PC-9 (cell line): ENCODE measurements at regions of chr18 and their contacts with region 1.

Region 1: GRCh38 chr18:13619505-13620202 is 106.7 kb downstream of the FAM210A start:
- DNase-seq: no peak
- H3K4me3 ChIP-seq: no peak overlapping the region
- H3K27ac ChIP-seq: no peak overlapping the region
- H3K4me1 ChIP-seq: no peaks in the 10 kb centered on the region
- H3K27me3 ChIP-seq: peaks cover 93% of the 10 kb centered on the region
- CTCF ChIP-seq: no peak

Region 2: DNA sequence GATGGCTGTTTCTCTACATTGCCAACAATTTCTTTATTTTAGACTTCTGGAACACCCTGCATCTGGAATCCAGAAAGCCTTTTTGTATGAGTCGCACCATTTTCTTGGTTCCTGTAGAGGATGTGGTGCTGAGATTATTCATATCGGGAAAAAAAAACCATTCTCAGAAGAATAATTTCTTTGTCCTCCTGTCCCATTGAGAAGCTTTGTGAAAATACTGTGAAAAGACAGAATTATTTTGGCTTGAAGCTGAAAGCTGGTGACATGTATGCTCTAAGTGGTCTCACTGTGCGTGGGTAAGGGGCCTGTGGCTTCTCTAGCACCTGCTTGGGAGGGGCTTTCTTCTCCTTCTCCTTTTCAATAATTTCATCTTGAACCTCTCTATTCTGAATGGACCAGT is 31.7 kb before region 1 on chr18:
- CTCF ChIA-PET with region 1: no interaction called
- POLR2A ChIA-PET with region 1: no interaction called
- intact Hi-C with region 1: loop called (anchors 1 kb)
- DNase-seq: no peak
- H3K4me3 ChIP-seq: no peak overlapping the region
- H3K27ac ChIP-seq: no peak overlapping the region
- H3K4me1 ChIP-seq: no peaks in the 10 kb centered on the region
- H3K27me3 ChIP-seq: peaks cover 18% of the 10 kb centered on the region; the same call in 1 of the 2 replicates
- CTCF ChIP-seq: no peak